Heart right ventricle (tissue), 16 donors: ENCODE measurements at regions of chr1 and their contacts with region 1.

Region 1: DNA sequence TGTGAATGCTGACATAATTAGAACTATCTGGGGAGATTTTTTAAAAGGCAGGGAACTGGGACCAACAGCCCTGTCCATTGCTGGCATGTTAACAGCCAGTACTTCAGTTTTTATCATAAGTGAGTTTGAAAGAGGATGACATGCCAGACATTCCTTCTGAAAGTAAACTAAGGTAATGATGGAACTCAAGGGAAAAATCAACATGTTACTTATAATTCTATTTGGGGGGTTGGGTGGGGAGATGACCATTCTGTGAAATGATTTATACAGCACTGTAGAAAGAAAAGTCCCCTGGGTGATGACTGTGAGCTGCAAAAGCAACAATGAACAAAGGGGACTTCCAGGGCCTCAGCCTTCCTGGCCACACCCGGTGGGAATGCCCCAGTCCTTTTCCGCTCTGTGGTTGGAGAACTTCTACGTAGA is 5.4 kb upstream of the LAMC2 start:
- DNase-seq: peak; percentile 29 to 71
- ATAC-seq: peak; percentile 80 to 96 (median 92)
- H3K4me3 ChIP-seq: peak overlapping the region in 1 of 10 donors; percentile 1
- H3K27ac ChIP-seq: peak overlapping the region; percentile 45 to 84 (median 77)
- H3K4me1 ChIP-seq: peaks cover 0 to 36% (median 28%) of the 10 kb centered on the region in 9 donors
- H3K27me3 ChIP-seq: peaks cover 0 to 1% (median 0%) of the 10 kb centered on the region in 7 donors
- CTCF ChIP-seq: no peak

Region 2: DNA sequence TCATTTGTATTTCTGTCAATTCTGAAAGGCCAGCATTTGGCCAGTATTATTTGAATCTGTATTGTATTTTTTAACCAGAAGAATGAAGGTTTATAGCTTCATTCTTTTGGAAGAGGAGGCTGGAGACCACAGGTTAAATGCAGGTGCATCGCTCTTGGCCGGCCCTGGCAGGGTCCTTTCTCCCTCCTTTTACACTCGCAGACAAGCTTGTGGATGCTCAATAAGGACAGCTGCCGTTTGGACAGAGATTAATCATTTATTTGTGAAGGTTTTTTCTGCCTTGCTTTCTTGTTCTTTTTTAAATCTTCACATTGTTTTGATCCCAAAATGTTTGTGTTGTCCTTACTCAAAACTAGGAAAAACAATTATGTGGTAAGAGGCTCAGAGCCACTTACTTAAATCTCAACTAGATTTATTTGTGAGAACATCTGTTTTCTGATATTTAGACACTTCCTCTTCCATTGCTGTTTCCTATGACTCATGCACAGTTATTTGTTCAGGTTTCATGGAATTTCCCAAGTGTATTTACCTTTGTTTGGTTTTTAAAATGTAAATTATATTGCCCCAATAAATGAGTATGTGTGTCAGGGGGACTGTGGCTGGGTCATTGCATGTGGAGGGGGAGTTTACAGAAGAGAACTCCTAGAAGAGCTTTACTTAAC is 41.2 kb before region 1 on chr1:
- intact Hi-C with region 1: no loop called
- DNase-seq: no peak
- ATAC-seq: peak in 3 of 8 donors; percentile 49 to 68 (median 51)
- H3K4me3 ChIP-seq: no peak overlapping the region
- H3K27ac ChIP-seq: peak overlapping the region; percentile 6 to 83 (median 48)
- H3K4me1 ChIP-seq: peaks cover 0 to 49% (median 26%) of the 10 kb centered on the region in 9 donors
- H3K27me3 ChIP-seq: no peaks in the 10 kb centered on the region
- CTCF ChIP-seq: no peak

Region 3: DNA sequence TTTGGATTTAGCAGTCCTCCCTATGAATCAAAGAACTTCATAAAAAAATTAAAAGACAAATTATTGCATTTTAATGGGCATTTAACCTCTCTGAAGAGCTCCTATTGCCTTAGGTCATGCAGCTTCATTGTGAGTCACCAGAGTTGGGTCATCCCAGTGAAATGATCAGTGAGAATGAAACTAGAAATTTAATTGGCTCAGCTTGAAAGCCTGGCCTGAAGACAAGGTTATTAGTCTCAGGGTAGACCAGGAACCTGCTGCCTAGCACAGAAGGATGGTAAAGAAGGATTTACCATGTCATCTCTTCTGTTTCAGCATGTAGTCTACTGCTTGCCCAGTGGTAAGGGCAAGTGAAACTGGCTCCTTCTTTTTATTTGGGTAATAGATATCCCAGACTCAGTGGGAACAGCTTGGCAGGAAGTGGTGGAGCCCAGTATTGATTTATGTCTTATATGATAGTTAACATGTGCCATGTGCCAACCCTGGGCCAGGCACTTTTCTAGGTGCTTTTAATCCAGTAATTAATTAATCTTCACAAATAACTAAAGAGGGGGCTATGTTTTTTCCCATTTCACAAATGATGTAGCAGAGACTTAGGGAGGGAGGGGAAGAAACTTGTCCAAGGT is 29.0 kb after region 1 on chr1:
- intact Hi-C with region 1: no loop called
- DNase-seq: no peak
- ATAC-seq: peak in 3 of 8 donors; percentile 40 to 71 (median 58)
- H3K4me3 ChIP-seq: no peak overlapping the region
- H3K27ac ChIP-seq: no peak overlapping the region
- H3K4me1 ChIP-seq: peaks cover 0 to 10% (median 0%) of the 10 kb centered on the region in 9 donors
- H3K27me3 ChIP-seq: no peaks in the 10 kb centered on the region
- CTCF ChIP-seq: no peak

Region 4: DNA sequence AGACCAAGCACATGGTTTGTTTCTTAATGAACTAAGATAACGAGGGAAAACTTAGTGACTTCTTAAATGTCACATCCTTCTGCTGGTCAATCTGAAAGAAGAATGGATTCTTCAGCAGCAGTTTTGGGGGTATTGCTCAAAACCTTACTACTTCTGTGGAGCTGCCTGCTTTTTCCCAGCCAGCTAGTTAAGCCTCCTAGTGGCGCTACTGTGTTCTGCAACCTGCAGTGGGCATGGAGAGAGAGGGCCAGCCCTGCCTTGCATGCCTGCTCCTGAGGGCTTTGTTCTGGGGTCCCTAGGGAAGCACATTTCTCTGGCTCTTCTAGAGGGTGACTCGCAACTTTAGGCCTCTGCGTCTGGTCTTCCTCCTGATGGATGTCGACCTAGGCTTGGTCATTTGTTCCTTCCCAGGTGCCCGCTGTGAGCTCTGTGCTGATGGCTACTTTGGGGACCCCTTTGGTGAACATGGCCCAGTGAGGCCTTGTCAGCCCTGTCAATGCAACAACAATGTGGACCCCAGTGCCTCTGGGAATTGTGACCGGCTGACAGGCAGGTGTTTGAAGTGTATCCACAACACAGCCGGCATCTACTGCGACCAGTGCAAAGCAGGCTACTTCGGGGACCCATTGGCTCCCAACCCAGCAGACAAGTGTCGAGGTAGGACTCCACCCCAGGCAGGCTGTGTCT is 47.5 kb after region 1 on chr1:
- intact Hi-C with region 1: loop called in 1 of 10 experiments (anchors 5 kb)
- DNase-seq: peak; percentile 44 to 45
- ATAC-seq: peak in 6 of 8 donors; percentile 61 to 83 (median 73)
- H3K4me3 ChIP-seq: no peak overlapping the region
- H3K27ac ChIP-seq: no peak overlapping the region
- H3K4me1 ChIP-seq: peaks cover 0 to 10% (median 0%) of the 10 kb centered on the region in 9 donors
- H3K27me3 ChIP-seq: no peaks in the 10 kb centered on the region
- CTCF ChIP-seq: peak; percentile 46 to 86 (median 79)